CD8-positive, alpha-beta T cell (primary cell): ENCODE measurements at regions of chr17 and their contacts with region 1.

Region 1: DNA sequence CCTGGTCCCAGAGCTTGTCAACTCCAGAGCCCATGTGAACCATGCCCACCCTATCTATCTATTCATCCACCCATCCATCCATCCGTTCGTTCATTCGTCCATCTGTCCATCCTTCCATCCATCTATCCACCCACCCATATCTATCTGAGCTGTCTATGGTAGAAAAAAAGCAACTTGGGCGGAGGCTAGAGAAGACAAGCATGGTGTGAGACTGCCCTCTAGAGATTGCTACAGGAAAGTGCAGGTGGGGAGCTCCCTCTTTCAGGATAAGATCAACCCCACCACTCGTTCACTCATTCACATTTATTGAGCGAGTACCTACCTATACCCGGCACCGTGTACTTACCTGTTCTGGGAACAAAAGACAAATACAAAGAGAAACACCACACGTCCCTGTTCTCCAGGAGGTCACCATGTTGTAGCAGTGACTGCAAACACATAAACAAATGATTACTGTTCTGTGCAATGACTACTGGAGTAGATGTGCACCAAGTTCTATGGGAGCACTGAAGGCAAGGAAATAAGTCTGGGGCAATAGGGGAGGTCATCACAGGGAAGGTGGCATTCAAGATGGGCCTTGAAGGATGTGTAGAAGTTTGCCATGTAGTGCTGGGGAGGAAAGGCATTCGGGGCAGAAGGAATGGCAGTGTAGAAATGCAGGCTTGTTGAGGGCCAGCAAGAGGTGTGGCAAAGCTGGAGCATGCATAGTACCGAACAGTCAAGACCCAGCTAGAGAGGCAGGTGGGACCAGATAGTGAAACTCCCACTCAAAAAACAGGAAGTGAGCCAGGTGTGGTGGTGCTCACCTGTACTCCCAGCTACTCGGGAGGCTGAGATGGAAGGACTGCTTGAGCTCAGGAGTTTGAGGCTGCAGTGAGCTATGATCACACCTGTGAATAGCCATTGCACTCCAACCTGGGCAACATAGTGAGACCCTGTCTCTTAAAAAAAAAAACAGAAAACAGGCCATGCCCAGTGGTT is 13.4 kb upstream of the ATP5MC1 start:
- DNase-seq: peak; percentile 24 to 85 (median 58)
- ATAC-seq: peak; percentile 99
- H3K4me3 ChIP-seq: no peak overlapping the region
- H3K4me3 Mint-ChIP-seq: no peak overlapping the region
- H3K27ac ChIP-seq: no peak overlapping the region
- H3K27ac Mint-ChIP-seq: no peak overlapping the region
- H3K4me1 ChIP-seq: peaks cover 3% of the 10 kb centered on the region
- H3K4me1 Mint-ChIP-seq: no peaks in the 10 kb centered on the region
- H3K27me3 ChIP-seq: no peaks in the 10 kb centered on the region
- H3K27me3 Mint-ChIP-seq: peaks cover 11% of the 10 kb centered on the region
- CTCF ChIP-seq: peak; percentile 99

Region 2: DNA sequence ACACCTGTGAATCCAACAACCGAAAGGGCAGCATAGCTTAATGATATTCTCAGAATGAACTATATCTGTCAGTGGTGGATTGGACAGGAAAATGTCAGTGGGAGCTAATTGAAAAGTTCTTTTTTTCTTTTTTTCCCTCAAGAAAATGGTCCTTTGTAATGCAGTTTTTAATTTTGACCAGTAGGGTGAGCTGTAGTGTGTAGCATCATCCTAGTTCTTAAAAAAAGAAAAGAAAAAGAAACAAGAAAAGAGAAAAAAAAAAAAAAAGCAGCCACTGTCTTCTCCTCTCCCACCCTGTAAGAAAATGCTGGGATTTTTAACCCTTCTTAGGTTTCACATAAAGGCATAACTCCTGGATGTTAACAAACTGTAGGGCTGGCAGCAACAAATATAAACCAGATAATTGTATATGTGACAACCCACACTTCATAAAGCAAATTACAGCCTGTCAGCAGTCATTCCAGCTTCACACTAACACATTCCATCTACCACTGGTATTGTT is 527.3 kb before region 1 on chr17:
- CTCF ChIA-PET with region 1: no interaction called
- POLR2A ChIA-PET with region 1: no interaction called
- intact Hi-C with region 1: no loop called
- DNase-seq: peak in 2 of 9 experiments; percentile 54 to 70
- ATAC-seq: peak; percentile 76
- H3K4me3 ChIP-seq: no peak overlapping the region
- H3K4me3 Mint-ChIP-seq: no peak overlapping the region
- H3K27ac ChIP-seq: no peak overlapping the region
- H3K27ac Mint-ChIP-seq: no peak overlapping the region
- H3K4me1 ChIP-seq: peaks cover 5% of the 10 kb centered on the region
- H3K4me1 Mint-ChIP-seq: peaks cover 16% of the 10 kb centered on the region
- H3K27me3 ChIP-seq: no peaks in the 10 kb centered on the region
- H3K27me3 Mint-ChIP-seq: no peaks in the 10 kb centered on the region
- CTCF ChIP-seq: peak; percentile 87

Region 3: GRCh38 chr17:48724251-48725003 is 154.8 kb before region 1 on chr17:
- CTCF ChIA-PET with region 1: interaction called, 43 read pairs
- POLR2A ChIA-PET with region 1: no interaction called
- intact Hi-C with region 1: loop called (anchors 1 to 2 kb)
- DNase-seq: peak; percentile 56 to 81 (median 78)
- ATAC-seq: peak; percentile 74
- H3K4me3 ChIP-seq: peak overlapping the region in 1 of 2 experiments; percentile 36
- H3K4me3 Mint-ChIP-seq: peak overlapping the region; percentile 69
- H3K27ac ChIP-seq: no peak overlapping the region
- H3K27ac Mint-ChIP-seq: no peak overlapping the region
- H3K4me1 ChIP-seq: peaks cover 53% of the 10 kb centered on the region
- H3K4me1 Mint-ChIP-seq: peaks cover 52% of the 10 kb centered on the region
- H3K27me3 ChIP-seq: peaks cover 86 to 89% of the 10 kb centered on the region in 2 experiments
- H3K27me3 Mint-ChIP-seq: peaks cover 72% of the 10 kb centered on the region
- CTCF ChIP-seq: peak; percentile 75

Region 4: DNA sequence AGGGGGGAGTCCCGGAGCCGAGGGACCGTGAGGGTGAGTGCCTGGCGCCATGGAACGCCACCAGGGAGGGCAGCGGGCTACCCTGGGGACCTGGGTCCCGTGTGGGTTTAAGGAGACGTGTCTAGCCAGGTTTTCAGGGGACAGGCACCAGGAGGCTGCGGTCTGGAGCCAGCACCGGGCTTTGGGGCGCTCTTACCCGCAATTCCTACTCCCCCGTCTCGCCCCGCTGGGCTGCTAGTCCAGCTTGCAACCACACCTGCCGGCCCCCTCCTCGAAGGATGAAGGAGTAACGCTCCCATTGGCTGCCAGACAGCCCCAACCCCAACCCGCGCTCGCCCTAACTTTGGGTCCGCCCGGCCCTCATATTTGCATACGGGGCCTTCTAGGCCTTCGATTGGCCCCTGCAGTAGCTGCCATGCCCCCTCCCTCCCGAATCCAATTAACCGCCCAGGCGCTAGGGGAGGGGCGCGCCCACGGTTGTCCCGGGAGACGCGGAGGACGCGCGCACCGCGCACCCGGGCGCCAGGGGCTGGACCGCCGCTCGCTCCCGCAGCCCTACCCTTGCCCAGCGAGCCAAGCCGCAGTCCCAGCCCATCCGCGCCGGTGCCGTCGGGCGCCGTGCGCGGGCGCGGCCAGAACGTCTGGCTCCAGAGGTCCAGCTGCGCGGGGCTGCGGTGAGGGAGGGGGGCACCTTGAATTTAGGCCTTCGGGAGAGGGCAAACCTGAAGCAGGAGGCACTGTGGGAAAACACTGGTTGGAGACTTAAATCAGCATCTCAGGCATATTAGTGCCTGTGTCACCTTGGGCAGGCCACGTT is 62.2 kb before region 1 on chr17 and contains the start of gene TTLL6:
- CTCF ChIA-PET with region 1: interaction called, 706 read pairs
- POLR2A ChIA-PET with region 1: interaction called, 7 read pairs
- intact Hi-C with region 1: loop called (anchors 1 kb)
- DNase-seq: peak; percentile 47 to 89 (median 74)
- ATAC-seq: peak; percentile 99
- H3K4me3 ChIP-seq: peak within 1 kb of the TSS; percentile 39 to 66
- H3K4me3 Mint-ChIP-seq: peak within 1 kb of the TSS; percentile 81
- H3K27ac ChIP-seq: no peak within 1 kb of the TSS
- H3K27ac Mint-ChIP-seq: no peak within 1 kb of the TSS
- H3K4me1 ChIP-seq: peaks cover 11% of the 10 kb centered on the region
- H3K4me1 Mint-ChIP-seq: peaks cover 11% of the 10 kb centered on the region
- H3K27me3 ChIP-seq: peaks cover 17 to 20% of the 10 kb centered on the region in 2 experiments
- H3K27me3 Mint-ChIP-seq: peaks cover 40% of the 10 kb centered on the region
- CTCF ChIP-seq: no peak
- total RNA-seq, gene TTLL6: not detected

Region 5: DNA sequence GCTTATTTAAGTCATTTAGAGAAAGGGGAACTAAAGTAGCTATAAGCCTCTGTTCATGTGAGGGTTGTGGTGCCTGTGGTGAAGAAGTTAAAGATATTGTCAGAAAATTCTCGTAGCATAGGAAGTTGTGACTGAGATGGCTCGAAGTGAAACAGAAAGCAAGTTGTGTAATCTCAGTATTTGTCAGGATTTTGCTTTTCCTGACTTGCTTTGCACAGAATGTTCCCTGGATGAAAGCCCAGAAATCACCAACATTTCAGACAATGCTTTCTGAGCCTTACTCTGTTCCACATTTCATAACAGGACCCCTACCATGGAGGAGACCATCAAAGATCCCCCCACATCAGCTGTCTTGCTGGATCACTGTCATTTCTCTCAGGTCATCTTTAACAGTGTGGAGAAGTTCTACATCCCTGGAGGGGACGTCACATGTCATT is 37.8 kb before region 1 on chr17:
- CTCF ChIA-PET with region 1: interaction called, 26 read pairs
- POLR2A ChIA-PET with region 1: interaction called, 4 read pairs
- intact Hi-C with region 1: no loop called
- DNase-seq: peak in 5 of 9 experiments; percentile 16 to 81 (median 39)
- ATAC-seq: peak; percentile 90
- H3K4me3 ChIP-seq: peak overlapping the region; percentile 38 to 41
- H3K4me3 Mint-ChIP-seq: peak overlapping the region; percentile 79
- H3K27ac ChIP-seq: peak overlapping the region; percentile 53 to 82
- H3K27ac Mint-ChIP-seq: peak overlapping the region; percentile 95
- H3K4me1 ChIP-seq: peaks cover 45% of the 10 kb centered on the region
- H3K4me1 Mint-ChIP-seq: peaks cover 52% of the 10 kb centered on the region
- H3K27me3 ChIP-seq: no peaks in the 10 kb centered on the region
- H3K27me3 Mint-ChIP-seq: no peaks in the 10 kb centered on the region
- CTCF ChIP-seq: no peak

Region 6: GRCh38 chr17:48892940-48893645 is 13.9 kb after region 1 on chr17:
- CTCF ChIA-PET with region 1: interaction called, 15 read pairs
- POLR2A ChIA-PET with region 1: interaction called, 3 read pairs
- intact Hi-C with region 1: no loop called
- DNase-seq: peak in 3 of 9 experiments; percentile 33 to 50 (median 38)
- ATAC-seq: no peak
- H3K4me3 ChIP-seq: peak overlapping the region; percentile 52 to 63
- H3K4me3 Mint-ChIP-seq: peak overlapping the region; percentile 93
- H3K27ac ChIP-seq: peak overlapping the region; percentile 55 to 91
- H3K27ac Mint-ChIP-seq: peak overlapping the region; percentile 99
- H3K4me1 ChIP-seq: peaks cover 15% of the 10 kb centered on the region
- H3K4me1 Mint-ChIP-seq: peaks cover 23% of the 10 kb centered on the region
- H3K27me3 ChIP-seq: no peaks in the 10 kb centered on the region
- H3K27me3 Mint-ChIP-seq: no peaks in the 10 kb centered on the region
- CTCF ChIP-seq: no peak